AG04449 (cell line): ENCODE measurements at regions of chr5 and their contacts with region 1.

Region 1: GRCh38 chr5:73120222-73121118 is at the start of gene TMEM171:
- DNase-seq: no peak
- H3K4me3 ChIP-seq: peak within 1 kb of the TSS; percentile 68
- CTCF ChIP-seq: no peak

Region 2: GRCh38 chr5:72871366-72872024 is 249.0 kb before region 1 on chr5:
- CTCF ChIA-PET with region 1: no interaction called
- POLR2A ChIA-PET with region 1: no interaction called
- DNase-seq: no peak
- H3K4me3 ChIP-seq: no peak overlapping the region
- CTCF ChIP-seq: no peak

Region 3: DNA sequence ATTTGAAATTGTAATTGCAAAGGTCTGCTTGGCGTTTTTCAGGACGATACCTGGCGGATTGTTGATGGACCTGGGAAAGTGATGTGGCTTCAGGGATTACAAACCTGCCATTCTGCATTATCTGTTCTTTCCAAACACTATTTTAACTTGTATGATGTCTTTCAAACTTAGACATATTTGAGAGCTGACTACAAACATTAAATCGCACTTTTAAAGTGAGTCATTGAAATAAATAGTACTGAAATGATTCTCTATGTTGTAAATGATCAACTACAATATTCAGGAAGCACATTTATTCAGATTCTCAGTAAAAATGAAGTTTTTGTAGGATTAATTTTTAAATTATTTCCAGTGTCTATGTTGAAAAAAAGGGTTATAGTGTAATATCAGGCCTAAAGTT is 32.4 kb before region 1 on chr5:
- CTCF ChIA-PET with region 1: interaction called, 12 read pairs
- POLR2A ChIA-PET with region 1: interaction called, 3 read pairs
- DNase-seq: no peak
- H3K4me3 ChIP-seq: no peak overlapping the region
- CTCF ChIP-seq: no peak

Region 4: DNA sequence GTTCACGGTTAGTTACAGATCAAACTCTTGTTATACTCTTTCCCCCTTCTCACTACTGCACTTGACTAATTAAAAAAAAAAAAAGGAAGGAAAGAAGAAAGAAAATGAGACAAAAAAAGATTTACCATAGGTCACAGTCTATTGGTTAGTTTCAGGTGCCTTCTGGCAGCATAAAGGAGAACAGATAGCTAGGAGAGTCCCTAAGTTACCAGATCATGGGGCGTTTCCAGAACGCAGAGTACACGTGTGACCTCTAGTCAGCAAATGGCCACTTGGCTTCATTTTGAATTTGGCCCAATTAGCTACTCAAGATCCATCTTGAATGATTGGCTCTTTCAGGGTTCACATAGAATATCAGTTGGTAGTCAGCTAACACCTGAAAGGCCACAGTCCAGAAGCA is 20.4 kb before region 1 on chr5:
- CTCF ChIA-PET with region 1: interaction called, 10 read pairs
- POLR2A ChIA-PET with region 1: interaction called, 5 read pairs
- DNase-seq: no peak
- H3K4me3 ChIP-seq: no peak overlapping the region
- CTCF ChIP-seq: no peak

Region 5: GRCh38 chr5:73135429-73136054 is 15.1 kb after region 1 on chr5:
- CTCF ChIA-PET with region 1: interaction called, 45 read pairs
- POLR2A ChIA-PET with region 1: interaction called, 4 read pairs
- DNase-seq: no peak
- H3K4me3 ChIP-seq: no peak overlapping the region
- CTCF ChIP-seq: peak; percentile 54